ENCODE measurements at regions of chr15 and their contacts with region 1.

Region 1: GRCh38 chr15:90071208-90071807 is 31.0 kb downstream of the IDH2 start:
- DNase-seq: peak; percentile 54 to 87 (median 83)
- ATAC-seq: peak; percentile 99
- H3K4me3 ChIP-seq: no peak overlapping the region
- H3K4me3 Mint-ChIP-seq: no peak overlapping the region
- H3K27ac ChIP-seq: no peak overlapping the region
- H3K27ac Mint-ChIP-seq: no peak overlapping the region
- H3K4me1 ChIP-seq: no peaks in the 10 kb centered on the region
- H3K4me1 Mint-ChIP-seq: peaks cover 7% of the 10 kb centered on the region
- H3K27me3 ChIP-seq: no peaks in the 10 kb centered on the region
- H3K27me3 Mint-ChIP-seq: no peaks in the 10 kb centered on the region
- CTCF ChIP-seq: peak; percentile 81

Region 2: GRCh38 chr15:89749951-89750559 is 321.3 kb before region 1 on chr15:
- CTCF ChIA-PET with region 1: no interaction called
- POLR2A ChIA-PET with region 1: no interaction called
- intact Hi-C with region 1: no loop called
- DNase-seq: peak in 3 of 9 experiments; percentile 4 to 25 (median 15)
- ATAC-seq: no peak
- H3K4me3 ChIP-seq: peak overlapping the region; percentile 40 to 76
- H3K4me3 Mint-ChIP-seq: peak overlapping the region; percentile 81
- H3K27ac ChIP-seq: no peak overlapping the region
- H3K27ac Mint-ChIP-seq: no peak overlapping the region
- H3K4me1 ChIP-seq: peaks cover 7% of the 10 kb centered on the region
- H3K4me1 Mint-ChIP-seq: peaks cover 3% of the 10 kb centered on the region
- H3K27me3 ChIP-seq: peaks cover 0 to 9% of the 10 kb centered on the region in 2 experiments
- H3K27me3 Mint-ChIP-seq: peaks cover 20% of the 10 kb centered on the region
- CTCF ChIP-seq: no peak

Region 3: GRCh38 chr15:89760303-89761008 is 310.9 kb before region 1 on chr15:
- CTCF ChIA-PET with region 1: interaction called, 6 read pairs
- POLR2A ChIA-PET with region 1: no interaction called
- intact Hi-C with region 1: loop called (anchors 1 to 5 kb)
- DNase-seq: peak; percentile 32 to 74 (median 64)
- ATAC-seq: peak; percentile 70
- H3K4me3 ChIP-seq: no peak overlapping the region
- H3K4me3 Mint-ChIP-seq: no peak overlapping the region
- H3K27ac ChIP-seq: no peak overlapping the region
- H3K27ac Mint-ChIP-seq: no peak overlapping the region
- H3K4me1 ChIP-seq: no peaks in the 10 kb centered on the region
- H3K4me1 Mint-ChIP-seq: no peaks in the 10 kb centered on the region
- H3K27me3 ChIP-seq: no peaks in the 10 kb centered on the region
- H3K27me3 Mint-ChIP-seq: peaks cover 8% of the 10 kb centered on the region
- CTCF ChIP-seq: peak; percentile 66

Region 4: GRCh38 chr15:90001683-90002427 is 69.5 kb before region 1 on chr15:
- CTCF ChIA-PET with region 1: interaction called, 11 read pairs
- POLR2A ChIA-PET with region 1: interaction called, 3 read pairs
- intact Hi-C with region 1: loop called (anchors 2 to 5 kb)
- DNase-seq: peak; percentile 22 to 82 (median 58)
- ATAC-seq: peak; percentile 65
- H3K4me3 ChIP-seq: peak overlapping the region; percentile 48 to 61
- H3K4me3 Mint-ChIP-seq: peak overlapping the region; percentile 88
- H3K27ac ChIP-seq: peak overlapping the region in 1 of 2 experiments; percentile 53
- H3K27ac Mint-ChIP-seq: peak overlapping the region; percentile 79
- H3K4me1 ChIP-seq: peaks cover 27% of the 10 kb centered on the region
- H3K4me1 Mint-ChIP-seq: peaks cover 51% of the 10 kb centered on the region
- H3K27me3 ChIP-seq: no peaks in the 10 kb centered on the region
- H3K27me3 Mint-ChIP-seq: no peaks in the 10 kb centered on the region
- CTCF ChIP-seq: no peak

Region 5: DNA sequence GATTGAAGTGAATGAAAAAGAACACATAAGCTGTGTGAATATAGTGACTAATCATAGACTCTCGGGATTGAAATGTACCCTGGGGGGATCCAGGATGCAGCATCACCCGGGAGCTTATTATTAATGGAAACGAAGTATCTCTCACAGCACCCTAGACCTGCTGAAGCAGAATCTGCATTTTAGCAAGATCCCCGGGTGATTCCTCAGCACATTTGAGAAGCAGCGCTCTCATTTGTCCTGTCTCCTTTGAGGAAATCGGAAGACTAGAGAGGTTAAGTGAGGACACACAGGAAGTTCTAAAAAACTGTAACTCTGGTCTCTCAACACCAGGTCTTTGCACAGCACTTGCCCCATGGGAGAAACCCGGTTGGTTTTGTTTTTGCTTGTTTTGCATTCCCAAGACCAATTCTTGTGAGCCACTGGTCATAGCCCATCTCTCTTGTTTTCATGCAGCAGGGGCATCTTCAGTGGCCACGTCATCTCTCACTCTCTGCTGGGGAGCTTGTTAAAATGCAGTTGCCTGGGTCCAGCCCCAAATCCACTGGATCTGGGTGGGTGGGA is 40.0 kb before region 1 on chr15:
- CTCF ChIA-PET with region 1: interaction called, 13 read pairs
- POLR2A ChIA-PET with region 1: no interaction called
- intact Hi-C with region 1: no loop called
- DNase-seq: peak in 2 of 9 experiments; percentile 44 to 68
- ATAC-seq: peak; percentile 37
- H3K4me3 ChIP-seq: no peak overlapping the region
- H3K4me3 Mint-ChIP-seq: peak overlapping the region; percentile 47
- H3K27ac ChIP-seq: peak overlapping the region in 1 of 2 experiments; percentile 42
- H3K27ac Mint-ChIP-seq: peak overlapping the region; percentile 32
- H3K4me1 ChIP-seq: peaks cover 42% of the 10 kb centered on the region
- H3K4me1 Mint-ChIP-seq: peaks cover 56% of the 10 kb centered on the region
- H3K27me3 ChIP-seq: no peaks in the 10 kb centered on the region
- H3K27me3 Mint-ChIP-seq: no peaks in the 10 kb centered on the region
- CTCF ChIP-seq: no peak

Region 6: DNA sequence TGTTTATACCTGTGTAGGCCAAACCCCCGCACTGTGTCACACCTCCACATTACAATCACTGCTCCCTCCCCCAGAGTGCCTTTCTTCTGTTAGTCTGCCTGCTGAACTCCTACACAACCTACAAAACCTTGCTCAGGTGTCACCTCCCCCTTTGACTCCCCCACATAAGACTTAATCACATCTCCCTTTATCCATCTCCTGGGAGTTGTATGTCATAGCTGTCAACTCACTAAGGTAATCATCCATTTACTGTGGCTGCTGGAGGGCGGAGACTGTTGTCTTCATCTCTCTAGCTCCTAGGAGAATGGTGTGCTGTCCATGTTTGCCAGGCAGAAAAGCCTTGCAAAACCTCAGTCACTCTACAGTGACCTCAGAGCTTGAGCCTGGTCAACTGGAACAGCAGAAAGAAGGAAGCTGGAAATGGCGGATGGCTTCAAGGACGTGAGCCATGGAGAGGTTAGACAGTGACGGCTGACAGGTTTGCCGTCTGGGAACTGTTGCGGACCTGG is 26.3 kb before region 1 on chr15:
- CTCF ChIA-PET with region 1: interaction called, 11 read pairs
- POLR2A ChIA-PET with region 1: no interaction called
- intact Hi-C with region 1: no loop called
- DNase-seq: no peak
- ATAC-seq: no peak
- H3K4me3 ChIP-seq: no peak overlapping the region
- H3K4me3 Mint-ChIP-seq: no peak overlapping the region
- H3K27ac ChIP-seq: no peak overlapping the region
- H3K27ac Mint-ChIP-seq: no peak overlapping the region
- H3K4me1 ChIP-seq: no peaks in the 10 kb centered on the region
- H3K4me1 Mint-ChIP-seq: peaks cover 10% of the 10 kb centered on the region
- H3K27me3 ChIP-seq: no peaks in the 10 kb centered on the region
- H3K27me3 Mint-ChIP-seq: no peaks in the 10 kb centered on the region
- CTCF ChIP-seq: no peak

Region 7: GRCh38 chr15:90059208-90059985 is 11.9 kb before region 1 on chr15:
- CTCF ChIA-PET with region 1: interaction called, 26 read pairs
- POLR2A ChIA-PET with region 1: no interaction called
- intact Hi-C with region 1: no loop called
- DNase-seq: peak; percentile 29 to 87 (median 60)
- ATAC-seq: peak; percentile 81
- H3K4me3 ChIP-seq: no peak overlapping the region
- H3K4me3 Mint-ChIP-seq: peak overlapping the region; percentile 35
- H3K27ac ChIP-seq: peak overlapping the region; percentile 40 to 75
- H3K27ac Mint-ChIP-seq: peak overlapping the region; percentile 91
- H3K4me1 ChIP-seq: peaks cover 30% of the 10 kb centered on the region
- H3K4me1 Mint-ChIP-seq: peaks cover 40% of the 10 kb centered on the region
- H3K27me3 ChIP-seq: no peaks in the 10 kb centered on the region
- H3K27me3 Mint-ChIP-seq: no peaks in the 10 kb centered on the region
- CTCF ChIP-seq: no peak

Region 8: DNA sequence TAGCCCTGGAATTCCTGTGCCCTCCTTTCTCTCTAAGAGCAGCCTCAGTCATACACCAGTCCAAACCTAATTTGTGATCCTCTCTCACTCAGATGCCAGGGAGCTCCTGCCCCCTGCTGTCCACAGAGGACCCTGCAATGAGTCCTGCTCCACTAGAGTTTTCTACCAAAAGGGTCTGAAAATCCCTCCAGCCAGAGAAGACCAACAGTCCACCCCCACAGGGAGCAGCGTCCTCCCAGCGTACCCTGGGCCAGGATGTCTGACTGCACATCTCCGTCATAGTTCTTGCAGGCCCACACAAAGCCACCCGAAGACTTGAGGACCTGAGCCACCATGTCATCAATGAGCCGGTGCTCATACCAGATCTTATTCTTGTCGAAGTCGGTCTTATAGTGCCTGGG is 15.6 kb after region 1 on chr15:
- CTCF ChIA-PET with region 1: interaction called, 18 read pairs
- POLR2A ChIA-PET with region 1: no interaction called
- intact Hi-C with region 1: no loop called
- DNase-seq: peak in 8 of 9 experiments; percentile 27 to 64 (median 48)
- ATAC-seq: peak; percentile 91
- H3K4me3 ChIP-seq: no peak overlapping the region
- H3K4me3 Mint-ChIP-seq: no peak overlapping the region
- H3K27ac ChIP-seq: no peak overlapping the region
- H3K27ac Mint-ChIP-seq: peak overlapping the region; percentile 70
- H3K4me1 ChIP-seq: no peaks in the 10 kb centered on the region
- H3K4me1 Mint-ChIP-seq: peaks cover 4% of the 10 kb centered on the region
- H3K27me3 ChIP-seq: no peaks in the 10 kb centered on the region
- H3K27me3 Mint-ChIP-seq: no peaks in the 10 kb centered on the region
- CTCF ChIP-seq: peak; percentile 59